ENCODE measurements at regions of chr5 and their contacts with region 1.

Region 1: DNA sequence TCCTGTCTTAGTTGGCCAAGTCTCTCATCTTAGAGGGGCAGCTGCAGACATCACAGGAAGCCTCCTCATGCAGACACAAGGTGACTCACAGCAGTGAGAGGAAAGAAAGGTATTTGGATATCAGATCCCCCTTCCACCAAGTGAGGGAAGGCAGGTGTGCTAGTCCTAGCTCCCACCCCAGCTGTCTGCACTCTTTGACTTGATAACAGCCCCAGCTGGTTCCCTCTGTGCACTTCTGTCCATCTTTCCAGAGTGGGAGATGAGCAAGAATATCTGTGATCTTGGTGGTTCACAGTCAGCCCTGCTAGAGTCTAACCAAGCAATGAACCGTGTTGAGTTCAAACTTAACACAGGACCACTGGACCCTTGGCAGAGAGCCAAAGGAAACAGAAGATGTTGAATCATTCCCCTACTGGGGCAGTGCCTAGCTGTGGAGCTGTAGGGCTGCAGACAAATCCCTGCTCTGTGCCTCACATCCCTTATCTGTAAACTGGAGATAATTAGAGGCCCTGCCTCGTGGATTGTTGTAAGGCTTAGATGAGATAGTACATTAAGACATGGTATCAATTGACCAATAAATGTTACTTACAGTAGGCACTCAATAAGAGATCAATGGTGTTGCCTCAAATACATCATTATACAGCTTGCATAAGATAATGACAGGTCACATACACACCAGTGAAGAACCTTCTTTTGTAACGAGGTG is 39.1 kb downstream of the SH3RF2 start:
- DNase-seq: peak; percentile 88
- H3K4me3 Mint-ChIP-seq: peak overlapping the region; percentile 28
- H3K27ac Mint-ChIP-seq: peak overlapping the region; percentile 83
- H3K4me1 Mint-ChIP-seq: peaks cover 65% of the 10 kb centered on the region
- H3K27me3 Mint-ChIP-seq: no peaks in the 10 kb centered on the region
- CTCF ChIP-seq: no peak

Region 2: DNA sequence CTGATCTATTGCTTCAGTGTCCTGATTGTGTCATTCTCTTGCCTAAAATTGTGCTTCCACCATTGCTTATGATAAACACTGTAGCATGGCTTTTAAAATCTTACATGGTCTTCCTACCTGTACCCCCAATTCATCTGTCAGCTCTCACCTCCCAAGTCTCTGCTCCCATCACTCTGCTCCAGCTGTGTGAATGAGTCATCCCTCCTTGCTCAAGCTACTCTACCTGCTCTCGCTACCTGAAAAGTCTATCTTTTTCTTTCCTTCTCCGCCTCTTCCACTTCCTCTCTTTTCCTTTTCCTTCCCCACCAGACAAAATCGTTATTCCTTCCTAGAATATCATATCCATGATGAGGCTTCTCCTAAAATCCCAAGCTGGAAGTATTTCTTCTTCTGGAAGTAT is 482.1 kb before region 1 on chr5:
- CTCF ChIA-PET with region 1: no interaction called
- intact Hi-C with region 1: no loop called
- DNase-seq: no peak
- H3K4me3 Mint-ChIP-seq: no peak overlapping the region
- H3K27ac Mint-ChIP-seq: peak overlapping the region; percentile 36
- H3K4me1 Mint-ChIP-seq: peaks cover 38% of the 10 kb centered on the region
- H3K27me3 Mint-ChIP-seq: no peaks in the 10 kb centered on the region
- CTCF ChIP-seq: no peak

Region 3: GRCh38 chr5:145946112-145946861 is 29.2 kb before region 1 on chr5:
- CTCF ChIA-PET with region 1: interaction called, 4 read pairs
- intact Hi-C with region 1: loop called (anchors 1 kb)
- DNase-seq: peak; percentile 41
- H3K4me3 Mint-ChIP-seq: peak overlapping the region; percentile 23
- H3K27ac Mint-ChIP-seq: peak overlapping the region; percentile 79
- H3K4me1 Mint-ChIP-seq: peaks cover 63% of the 10 kb centered on the region
- H3K27me3 Mint-ChIP-seq: no peaks in the 10 kb centered on the region
- CTCF ChIP-seq: no peak

Region 4: GRCh38 chr5:146042628-146043279 is 67.2 kb after region 1 on chr5:
- CTCF ChIA-PET with region 1: interaction called, 9 read pairs
- intact Hi-C with region 1: loop called (anchors 1 kb)
- DNase-seq: peak; percentile 45
- H3K4me3 Mint-ChIP-seq: peak overlapping the region; percentile 2
- H3K27ac Mint-ChIP-seq: peak overlapping the region; percentile 74
- H3K4me1 Mint-ChIP-seq: peaks cover 37% of the 10 kb centered on the region
- H3K27me3 Mint-ChIP-seq: no peaks in the 10 kb centered on the region
- CTCF ChIP-seq: no peak